GM12878 (cell line): ENCODE measurements at regions of chr21 and their contacts with region 1.

Region 1: GRCh38 chr21:29125191-29125590 is 5.3 kb upstream of the MAP3K7CL start:
- DNase-seq: peak; percentile 71
- ATAC-seq: peak; percentile 94
- H3K4me3 ChIP-seq: peak overlapping the region; percentile 43
- H3K27ac ChIP-seq: peak overlapping the region; percentile 80
- H3K4me1 ChIP-seq: peaks cover 28% of the 10 kb centered on the region
- H3K27me3 ChIP-seq: no peaks in the 10 kb centered on the region
- CTCF ChIP-seq: peak in 2 of 3 experiments; percentile 16 to 26; a peak in 2 of 6 replicates
- EP300 ChIP-seq: peak in 1 of 2 experiments; percentile 43; a peak in 1 of 4 replicates
- POLR2A ChIP-seq: no peak
- RAD21 ChIP-seq: peak; percentile 32; the same call in 1 of the 2 replicates

Region 2: GRCh38 chr21:28928578-28929420 is 196.4 kb before region 1 on chr21:
- CTCF ChIA-PET with region 1: no interaction called
- POLR2A ChIA-PET with region 1: no interaction called
- RAD21 ChIA-PET with region 1: no interaction called
- SMC1A ChIA-PET with region 1: no interaction called
- in situ Hi-C with region 1: no loop called
- intact Hi-C with region 1: no loop called
- DNase-seq: no peak
- ATAC-seq: no peak
- H3K4me3 ChIP-seq: no peak overlapping the region
- H3K27ac ChIP-seq: no peak overlapping the region
- H3K4me1 ChIP-seq: no peaks in the 10 kb centered on the region
- H3K27me3 ChIP-seq: no peaks in the 10 kb centered on the region
- CTCF ChIP-seq: no peak
- EP300 ChIP-seq: no peak
- POLR2A ChIP-seq: no peak
- RAD21 ChIP-seq: no peak

Region 3: GRCh38 chr21:29104239-29104708 is 20.9 kb before region 1 on chr21:
- CTCF ChIA-PET with region 1: interaction called, 3 read pairs
- POLR2A ChIA-PET with region 1: interaction called, 3 read pairs
- RAD21 ChIA-PET with region 1: interaction called, 4 read pairs
- SMC1A ChIA-PET with region 1: interaction called, 21 read pairs
- in situ Hi-C with region 1: no loop called
- intact Hi-C with region 1: no loop called
- DNase-seq: no peak
- ATAC-seq: peak; percentile 89
- H3K4me3 ChIP-seq: no peak overlapping the region
- H3K27ac ChIP-seq: 0 out of 2 replicates have a peak overlapping the region, but pooled peaks have one; percentile 4
- H3K4me1 ChIP-seq: peaks cover 13% of the 10 kb centered on the region
- H3K27me3 ChIP-seq: no peaks in the 10 kb centered on the region
- CTCF ChIP-seq: no peak; a peak in 1 of 6 replicates
- EP300 ChIP-seq: no peak
- POLR2A ChIP-seq: no peak
- RAD21 ChIP-seq: no peak

Region 4: DNA sequence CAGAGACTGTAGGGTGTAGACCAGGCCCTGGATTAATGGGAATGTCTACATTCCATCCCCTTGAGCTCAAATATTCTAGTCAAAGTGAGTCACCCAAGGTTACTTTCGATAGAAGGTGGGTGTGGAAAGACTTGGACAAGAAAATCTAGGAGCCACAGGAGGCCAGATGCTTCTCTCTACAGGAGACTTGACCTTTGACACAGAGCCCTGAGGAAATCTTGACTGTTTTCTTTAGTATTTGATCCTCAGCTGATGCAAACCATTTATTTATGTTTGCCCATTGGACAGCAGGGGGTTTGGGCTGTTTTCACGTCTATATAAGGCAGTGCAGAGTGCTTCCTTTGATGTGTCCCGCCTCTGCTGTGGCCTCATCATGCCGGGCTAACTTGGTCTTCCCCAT is 10.4 kb before region 1 on chr21:
- CTCF ChIA-PET with region 1: interaction called, 6 read pairs
- POLR2A ChIA-PET with region 1: interaction called, 3 read pairs
- RAD21 ChIA-PET with region 1: interaction called, 4 read pairs
- SMC1A ChIA-PET with region 1: interaction called, 21 read pairs
- in situ Hi-C with region 1: no loop called
- intact Hi-C with region 1: no loop called
- DNase-seq: no peak
- ATAC-seq: no peak
- H3K4me3 ChIP-seq: no peak overlapping the region
- H3K27ac ChIP-seq: no peak overlapping the region
- H3K4me1 ChIP-seq: peaks cover 10% of the 10 kb centered on the region
- H3K27me3 ChIP-seq: no peaks in the 10 kb centered on the region
- CTCF ChIP-seq: no peak
- EP300 ChIP-seq: no peak
- POLR2A ChIP-seq: no peak
- RAD21 ChIP-seq: no peak

Region 5: DNA sequence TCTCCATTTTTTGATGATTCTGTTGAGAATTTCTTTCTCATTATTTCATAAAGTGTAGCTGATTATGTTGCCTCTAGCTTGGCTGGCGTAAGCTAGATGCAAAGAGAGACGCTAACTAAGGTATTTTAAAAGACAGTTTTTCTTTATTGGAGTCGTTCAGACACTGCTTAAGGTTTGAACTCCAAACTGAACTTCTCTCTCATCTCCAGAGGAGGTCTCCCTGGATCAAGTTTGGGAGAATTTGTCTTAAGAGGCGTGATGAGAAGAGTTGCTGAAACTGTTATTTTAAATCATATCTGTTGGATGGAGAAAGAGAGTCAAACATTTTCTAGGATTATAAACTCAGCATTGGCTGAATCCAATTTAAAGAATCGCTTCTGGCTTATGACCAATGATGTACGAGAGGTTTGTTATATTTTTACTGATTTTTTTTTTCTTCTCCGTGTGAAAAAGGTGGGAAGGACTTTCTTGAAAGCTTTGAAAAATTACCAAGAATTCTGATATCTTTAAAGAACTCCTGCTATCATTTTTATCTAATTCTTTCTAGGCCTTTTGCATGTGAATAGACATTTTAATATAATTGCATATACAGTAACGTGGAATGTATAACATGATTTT is 39.2 kb after region 1 on chr21:
- CTCF ChIA-PET with region 1: interaction called, 4 read pairs
- POLR2A ChIA-PET with region 1: no interaction called
- RAD21 ChIA-PET with region 1: interaction called, 4 read pairs
- SMC1A ChIA-PET with region 1: interaction called, 10 read pairs
- in situ Hi-C with region 1: no loop called
- intact Hi-C with region 1: no loop called
- DNase-seq: no peak
- ATAC-seq: peak; percentile 78
- H3K4me3 ChIP-seq: no peak overlapping the region
- H3K27ac ChIP-seq: no peak overlapping the region
- H3K4me1 ChIP-seq: no peaks in the 10 kb centered on the region
- H3K27me3 ChIP-seq: no peaks in the 10 kb centered on the region
- CTCF ChIP-seq: peak; percentile 36 to 55 (median 50); a peak in 5 of 6 replicates
- EP300 ChIP-seq: no peak
- POLR2A ChIP-seq: no peak
- RAD21 ChIP-seq: peak; percentile 97

Region 6: GRCh38 chr21:29195981-29196669 is 70.9 kb after region 1 on chr21:
- CTCF ChIA-PET with region 1: interaction called, 13 read pairs
- POLR2A ChIA-PET with region 1: interaction called, 3 read pairs
- RAD21 ChIA-PET with region 1: interaction called, 8 read pairs
- SMC1A ChIA-PET with region 1: interaction called, 4 read pairs
- in situ Hi-C with region 1: no loop called
- intact Hi-C with region 1: no loop called
- DNase-seq: peak; percentile 90
- ATAC-seq: peak; percentile 99
- H3K4me3 ChIP-seq: peak overlapping the region; percentile 51; the same call in 1 of the 2 replicates
- H3K27ac ChIP-seq: peak overlapping the region; percentile 80
- H3K4me1 ChIP-seq: peaks cover 13% of the 10 kb centered on the region
- H3K27me3 ChIP-seq: no peaks in the 10 kb centered on the region
- CTCF ChIP-seq: peak; percentile 49 to 67 (median 62)
- EP300 ChIP-seq: peak; percentile 61 to 74; a peak in 2 of 4 replicates
- POLR2A ChIP-seq: 0 out of 2 replicates have a peak, but pooled peaks have one; percentile 37
- RAD21 ChIP-seq: peak; percentile 55

Region 7: GRCh38 chr21:29360799-29361765 is 235.9 kb after region 1 on chr21:
- CTCF ChIA-PET with region 1: no interaction called
- POLR2A ChIA-PET with region 1: no interaction called
- RAD21 ChIA-PET with region 1: no interaction called
- SMC1A ChIA-PET with region 1: no interaction called
- in situ Hi-C with region 1: no loop called
- intact Hi-C with region 1: no loop called
- DNase-seq: no peak
- ATAC-seq: peak; percentile 36; the same call in 1 of the 3 replicates
- H3K4me3 ChIP-seq: no peak overlapping the region
- H3K27ac ChIP-seq: no peak overlapping the region
- H3K4me1 ChIP-seq: no peaks in the 10 kb centered on the region
- H3K27me3 ChIP-seq: no peaks in the 10 kb centered on the region
- CTCF ChIP-seq: peak in 1 of 3 experiments; percentile 5; a peak in 1 of 6 replicates
- EP300 ChIP-seq: no peak
- POLR2A ChIP-seq: no peak
- RAD21 ChIP-seq: 0 out of 2 replicates have a peak, but pooled peaks have one; percentile 8

Region 8: DNA sequence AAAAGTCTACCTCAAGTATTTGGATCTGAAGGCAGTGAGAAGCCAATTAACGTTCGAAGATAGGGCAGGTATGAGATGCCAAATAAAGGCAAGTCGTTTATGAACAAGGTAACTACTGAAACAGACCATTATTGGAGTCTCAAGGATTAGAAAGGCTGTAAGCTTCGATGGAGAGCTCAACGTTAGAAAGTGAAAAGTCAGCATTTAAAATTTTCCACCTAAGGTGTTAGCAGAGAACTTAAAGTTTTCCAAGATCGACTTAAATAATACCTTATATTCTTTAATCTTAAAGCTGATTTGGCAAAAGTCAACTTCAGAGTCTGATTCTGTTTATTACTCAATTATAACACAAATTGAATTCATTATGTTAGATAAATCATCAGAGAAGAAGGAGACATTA is 1013.3 kb after region 1 on chr21:
- CTCF ChIA-PET with region 1: no interaction called
- POLR2A ChIA-PET with region 1: no interaction called
- RAD21 ChIA-PET with region 1: no interaction called
- SMC1A ChIA-PET with region 1: no interaction called
- in situ Hi-C with region 1: no loop called
- intact Hi-C with region 1: no loop called
- DNase-seq: no peak
- ATAC-seq: no peak
- H3K4me3 ChIP-seq: no peak overlapping the region
- H3K27ac ChIP-seq: no peak overlapping the region
- H3K4me1 ChIP-seq: no peaks in the 10 kb centered on the region
- H3K27me3 ChIP-seq: no peaks in the 10 kb centered on the region
- CTCF ChIP-seq: no peak
- EP300 ChIP-seq: no peak
- POLR2A ChIP-seq: no peak
- RAD21 ChIP-seq: no peak